ENCODE measurements at regions of chr7 and their contacts with region 1.

Region 1: GRCh38 chr7:25259587-25260243 is 31.4 kb upstream of the NPVF start:
- DNase-seq: peak; percentile 60 to 86
- H3K4me3 ChIP-seq: no peak overlapping the region
- CTCF ChIP-seq: peak in 1 of 3 donors; percentile 66
- POLR2A ChIP-seq: no peak

Region 2: GRCh38 chr7:25389489-25390106 is 129.9 kb after region 1 on chr7:
- intact Hi-C with region 1: loop called (anchors 5 kb)
- DNase-seq: no peak
- H3K4me3 ChIP-seq: no peak overlapping the region
- CTCF ChIP-seq: no peak
- POLR2A ChIP-seq: no peak

Region 3: DNA sequence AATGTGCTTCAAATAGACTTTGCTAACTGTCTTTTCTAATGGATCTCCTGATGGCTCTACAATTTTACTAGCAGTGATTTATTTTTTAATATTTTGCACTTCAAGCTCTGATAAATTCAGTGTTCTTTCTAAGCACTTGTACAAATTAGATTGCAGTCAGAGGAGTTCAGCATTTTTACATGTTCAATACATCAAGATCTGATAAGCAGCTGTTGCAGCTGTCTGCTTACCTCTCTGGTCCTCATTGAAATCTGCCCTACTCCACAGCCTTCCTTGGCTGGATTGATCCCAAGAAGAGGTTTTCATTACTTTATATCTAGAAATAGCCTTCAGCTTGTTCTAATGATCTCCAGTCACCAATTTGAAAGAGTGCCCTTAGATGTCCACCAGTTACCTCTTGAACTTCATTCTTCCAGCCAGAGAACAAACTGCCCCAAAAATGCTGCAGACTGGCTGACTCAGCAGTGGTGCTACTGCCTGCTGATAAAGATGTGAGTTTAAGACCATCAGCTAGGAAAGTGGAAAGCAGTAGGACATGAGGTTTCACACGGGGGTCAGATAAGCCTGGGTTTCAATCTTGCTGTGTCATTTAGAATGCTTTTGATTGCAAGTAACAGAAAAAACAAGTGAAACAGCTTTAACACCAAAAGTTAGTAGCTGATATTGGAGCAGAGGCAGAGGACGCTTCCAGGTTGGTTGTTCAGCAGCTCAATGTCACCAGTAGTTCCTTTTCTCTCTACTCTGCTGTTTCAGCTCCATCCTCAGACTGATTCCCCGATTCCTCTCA is 319.5 kb after region 1 on chr7:
- intact Hi-C with region 1: loop called (anchors 5 kb)
- DNase-seq: no peak
- H3K4me3 ChIP-seq: no peak overlapping the region
- CTCF ChIP-seq: no peak
- POLR2A ChIP-seq: no peak

Region 4: DNA sequence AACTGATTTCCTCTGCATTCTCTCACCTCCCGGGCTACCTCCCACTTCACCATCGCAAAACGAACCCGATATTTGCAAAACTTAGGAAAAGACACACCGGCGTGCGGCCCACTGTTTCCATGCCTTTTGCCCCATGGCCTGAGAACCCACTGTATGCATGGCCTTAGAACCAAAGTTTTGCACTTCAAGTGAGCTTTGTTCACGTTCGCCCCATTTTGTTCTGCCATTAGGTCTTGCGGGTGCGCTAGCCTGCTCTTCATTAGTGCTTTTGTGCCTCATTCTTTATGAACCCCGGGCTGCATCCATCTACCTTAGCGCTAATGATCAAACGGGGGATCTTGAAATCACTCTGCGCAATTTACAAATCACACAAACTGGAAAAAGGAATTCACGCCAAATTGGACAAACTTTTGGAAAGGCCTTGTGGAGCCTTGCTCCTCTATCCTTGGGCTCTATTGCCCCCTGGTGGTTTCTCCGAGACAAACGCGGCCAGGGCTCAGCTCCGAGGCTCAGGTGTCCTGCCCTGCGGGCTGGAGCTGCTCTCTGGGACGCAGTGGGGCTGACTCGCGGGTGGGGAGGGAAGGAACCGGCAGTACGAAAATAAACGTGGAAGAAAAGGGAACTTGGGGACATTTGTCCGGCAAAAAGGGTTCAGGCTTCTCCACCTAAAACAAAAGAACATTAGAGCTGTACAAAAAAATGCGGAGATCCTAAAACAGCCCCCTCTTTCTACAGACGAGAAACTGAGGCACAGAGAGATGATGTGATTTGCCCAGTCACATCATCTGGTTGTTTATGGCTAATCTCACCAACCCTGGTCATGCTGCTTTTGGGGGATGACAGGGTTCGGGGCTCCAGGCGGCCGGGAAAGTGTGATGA is 591.9 kb after region 1 on chr7:
- intact Hi-C with region 1: loop called (anchors 5 kb)
- DNase-seq: peak; percentile 86 to 96
- H3K4me3 ChIP-seq: no peak overlapping the region
- CTCF ChIP-seq: peak in 1 of 3 donors; percentile 61
- POLR2A ChIP-seq: no peak

Region 5: DNA sequence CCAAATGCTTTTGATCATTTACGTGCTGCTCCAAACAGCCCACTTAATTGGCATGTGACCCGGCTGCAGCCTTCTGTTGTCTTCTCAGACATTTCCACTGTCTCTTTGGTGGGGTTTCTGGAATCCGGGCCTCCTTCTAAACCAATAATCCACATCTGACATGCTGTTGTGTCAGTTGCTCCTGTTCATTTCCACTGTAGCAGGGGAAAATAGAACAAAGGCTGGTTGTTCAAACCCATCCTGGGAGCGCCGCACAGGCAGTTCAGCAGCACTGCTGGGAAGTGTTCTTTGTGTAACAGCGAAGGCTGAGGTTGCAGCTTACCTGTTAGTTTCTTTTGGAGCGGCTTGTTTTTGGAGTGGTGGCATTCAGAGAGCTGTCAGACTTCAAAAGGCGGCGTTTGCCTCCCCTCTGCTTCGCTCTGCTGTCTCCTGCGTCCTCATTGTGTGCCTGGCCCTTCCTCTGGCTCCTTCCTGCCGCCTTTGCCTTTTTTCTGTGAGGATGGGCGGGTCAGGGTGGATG is 1181.3 kb after region 1 on chr7:
- intact Hi-C with region 1: no loop called
- DNase-seq: no peak
- H3K4me3 ChIP-seq: no peak overlapping the region
- CTCF ChIP-seq: no peak
- POLR2A ChIP-seq: no peak

Region 6: DNA sequence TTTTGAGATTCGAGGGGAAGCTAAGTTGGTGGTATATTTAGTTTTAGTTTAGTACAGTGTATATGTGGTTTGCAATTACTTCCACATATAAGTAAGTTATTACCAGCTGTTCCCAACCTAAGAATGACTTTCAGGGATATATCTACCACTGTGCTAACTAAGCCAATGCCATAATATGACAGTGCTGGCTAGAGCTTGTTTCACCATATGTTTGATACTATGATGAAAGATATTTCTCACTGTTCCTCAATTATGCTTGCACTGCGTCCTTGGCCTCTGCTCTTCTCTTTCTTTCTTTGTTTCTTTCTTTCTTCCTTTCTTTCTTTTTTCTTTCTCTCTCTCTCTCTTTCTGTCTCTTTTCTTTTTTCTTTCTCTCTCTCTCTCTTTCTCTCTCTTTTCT is 1718.4 kb after region 1 on chr7:
- intact Hi-C with region 1: no loop called
- DNase-seq: no peak
- H3K4me3 ChIP-seq: no peak overlapping the region
- CTCF ChIP-seq: no peak
- POLR2A ChIP-seq: no peak

Measured in lower leg skin (tissue), 4 donors.